Activated CD4-positive, alpha-beta memory T cell treated with anti-CD3 and anti-CD28 coated beads, Interleukin-2, amount 10 ng/mL, durations not matched to agents 7 days and 5 days (primary cell): ENCODE measurements at regions of chrX and their contacts with region 1.

Region 1: DNA sequence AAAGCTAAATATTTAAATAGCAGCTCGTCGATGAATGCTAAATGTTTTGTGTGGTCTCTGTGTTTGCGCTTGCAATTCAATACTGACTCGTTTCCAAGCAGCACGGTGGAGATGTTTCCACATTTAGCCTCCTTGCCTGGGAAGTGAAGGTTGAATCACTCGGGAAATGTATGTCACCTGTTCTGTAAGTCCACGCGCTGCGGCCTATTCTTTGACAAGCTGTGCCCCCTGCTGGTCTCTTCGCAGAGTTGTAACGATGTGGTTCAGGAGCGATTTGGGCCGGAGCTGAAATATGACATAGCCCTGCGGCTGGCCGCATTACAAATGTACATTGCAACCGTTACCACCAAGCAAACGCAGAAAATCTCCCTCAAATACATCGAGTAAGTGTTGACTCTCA is 89.6 kb upstream of the PRPS2 start:
- DNase-seq: peak; percentile 29
- H3K4me3 Mint-ChIP-seq: no peak overlapping the region
- H3K27ac Mint-ChIP-seq: no peak overlapping the region
- H3K4me1 Mint-ChIP-seq: no peaks in the 10 kb centered on the region
- H3K27me3 Mint-ChIP-seq: peaks cover 6% of the 10 kb centered on the region

Region 2: GRCh38 chrX:12901486-12901885 is 199.9 kb after region 1 on chrX:
- CTCF ChIA-PET with region 1: interaction called, 11 read pairs
- POLR2A ChIA-PET with region 1: no interaction called
- DNase-seq: peak; percentile 69
- H3K4me3 Mint-ChIP-seq: no peak overlapping the region
- H3K27ac Mint-ChIP-seq: no peak overlapping the region
- H3K4me1 Mint-ChIP-seq: peaks cover 3% of the 10 kb centered on the region
- H3K27me3 Mint-ChIP-seq: peaks cover 4% of the 10 kb centered on the region

Region 3: DNA sequence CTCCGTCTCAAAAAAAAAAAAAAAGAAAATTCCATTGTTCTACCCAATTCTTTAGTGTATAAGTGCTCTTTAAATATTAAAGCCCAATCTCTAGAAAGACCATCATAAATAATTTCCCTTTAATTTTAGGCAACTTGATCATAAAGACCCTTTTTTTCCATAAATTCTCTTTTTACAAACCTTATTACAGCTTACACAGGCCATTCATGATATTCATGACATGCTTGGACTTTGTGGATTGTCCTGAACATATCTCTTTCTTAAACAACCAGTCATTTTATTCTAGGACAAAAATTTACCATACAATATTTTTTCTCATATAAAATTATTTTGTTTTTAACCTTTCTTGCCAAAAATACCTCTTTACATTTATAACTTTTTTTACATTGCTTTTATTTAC is 235.3 kb after region 1 on chrX:
- CTCF ChIA-PET with region 1: no interaction called
- POLR2A ChIA-PET with region 1: no interaction called
- DNase-seq: no peak
- H3K4me3 Mint-ChIP-seq: no peak overlapping the region
- H3K27ac Mint-ChIP-seq: no peak overlapping the region
- H3K4me1 Mint-ChIP-seq: peaks cover 2% of the 10 kb centered on the region
- H3K27me3 Mint-ChIP-seq: no peaks in the 10 kb centered on the region